Tibial artery (tissue), 4 donors: ENCODE measurements at regions of chr1 and their contacts with region 1.

Region 1: GRCh38 chr1:25616095-25616986 is at the start of gene MAN1C1:
- DNase-seq: peak; percentile 83 to 95
- H3K4me3 ChIP-seq: peak within 1 kb of the TSS; percentile 78 to 94
- H3K27ac ChIP-seq: peak within 1 kb of the TSS; percentile 82
- H3K4me1 ChIP-seq: peaks cover 0 to 48% (median 28%) of the 10 kb centered on the region in 4 donors
- H3K27me3 ChIP-seq: no peaks in the 10 kb centered on the region
- CTCF ChIP-seq: peak; percentile 45 to 63

Region 2: GRCh38 chr1:25743826-25744581 is 127.7 kb after region 1 on chr1:
- intact Hi-C with region 1: loop called (anchors 2 kb)
- DNase-seq: peak; percentile 85 to 93
- H3K4me3 ChIP-seq: no peak overlapping the region
- H3K27ac ChIP-seq: peak overlapping the region; percentile 81 to 89
- H3K4me1 ChIP-seq: peaks cover 7 to 33% (median 29%) of the 10 kb centered on the region in 4 donors
- H3K27me3 ChIP-seq: no peaks in the 10 kb centered on the region
- CTCF ChIP-seq: peak; percentile 55 to 64